Activated CD4-positive, alpha-beta T cell treated with anti-CD3 and anti-CD28 coated beads, Interleukin-2, amount 10 ng/mL, durations not matched to agents 24 days and 14 days (primary cell): ENCODE measurements at regions of chr4 and their contacts with region 1.

Region 1: GRCh38 chr4:39134683-39135319 is 47.5 kb upstream of the WDR19 start:
- DNase-seq: no peak
- H3K4me3 Mint-ChIP-seq: no peak overlapping the region
- H3K27ac Mint-ChIP-seq: peak overlapping the region; percentile 36
- H3K4me1 Mint-ChIP-seq: peaks cover 13% of the 10 kb centered on the region
- H3K27me3 Mint-ChIP-seq: no peaks in the 10 kb centered on the region

Region 2: GRCh38 chr4:38832624-38833528 is 301.9 kb before region 1 on chr4:
- intact Hi-C with region 1: no loop called
- DNase-seq: no peak
- H3K4me3 Mint-ChIP-seq: no peak overlapping the region
- H3K27ac Mint-ChIP-seq: no peak overlapping the region
- H3K4me1 Mint-ChIP-seq: peaks cover 6% of the 10 kb centered on the region
- H3K27me3 Mint-ChIP-seq: no peaks in the 10 kb centered on the region

Region 3: DNA sequence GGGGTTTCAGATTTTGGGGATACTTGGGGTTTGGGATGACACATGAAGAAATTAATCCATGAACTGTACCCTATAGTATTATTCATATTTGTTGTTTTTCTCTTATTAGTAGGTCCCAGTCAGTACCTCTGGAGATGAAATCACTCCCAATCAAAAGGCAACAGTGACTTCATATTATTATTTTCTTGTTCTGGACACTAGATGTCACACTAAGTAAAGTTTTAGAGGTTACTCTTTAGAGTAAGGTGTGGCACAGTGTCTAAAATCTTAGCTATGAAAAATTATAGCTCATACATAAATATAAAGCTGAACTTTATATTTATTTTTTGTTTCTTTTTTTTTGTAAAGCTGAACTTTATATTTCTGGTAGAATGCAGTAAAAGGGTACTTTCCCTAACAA is 232.1 kb before region 1 on chr4:
- intact Hi-C with region 1: loop called (anchors 1 kb)
- DNase-seq: no peak
- H3K4me3 Mint-ChIP-seq: no peak overlapping the region
- H3K27ac Mint-ChIP-seq: no peak overlapping the region
- H3K4me1 Mint-ChIP-seq: peaks cover 15% of the 10 kb centered on the region
- H3K27me3 Mint-ChIP-seq: no peaks in the 10 kb centered on the region